MCF 10A (cell line): ENCODE measurements at regions of chr16 and their contacts with region 1.

Region 1: GRCh38 chr16:3400779-3401688 is at the starts of genes ZNF174 and ZSCAN32:
- DNase-seq: peak; percentile 99
- H3K4me3 Mint-ChIP-seq: peak within 1 kb of the TSS; percentile 92
- H3K27ac Mint-ChIP-seq: peak within 1 kb of the TSS; percentile 91
- H3K4me1 Mint-ChIP-seq: peaks cover 11% of the 10 kb centered on the region
- H3K27me3 Mint-ChIP-seq: no peaks in the 10 kb centered on the region
- CTCF ChIP-seq: no peak
- total RNA-seq, gene ZNF174: 7.5 and 8.9 TPM in 2 replicates
- total RNA-seq, gene ZSCAN32: 17.5 and 18.1 TPM in 2 replicates

Region 2: DNA sequence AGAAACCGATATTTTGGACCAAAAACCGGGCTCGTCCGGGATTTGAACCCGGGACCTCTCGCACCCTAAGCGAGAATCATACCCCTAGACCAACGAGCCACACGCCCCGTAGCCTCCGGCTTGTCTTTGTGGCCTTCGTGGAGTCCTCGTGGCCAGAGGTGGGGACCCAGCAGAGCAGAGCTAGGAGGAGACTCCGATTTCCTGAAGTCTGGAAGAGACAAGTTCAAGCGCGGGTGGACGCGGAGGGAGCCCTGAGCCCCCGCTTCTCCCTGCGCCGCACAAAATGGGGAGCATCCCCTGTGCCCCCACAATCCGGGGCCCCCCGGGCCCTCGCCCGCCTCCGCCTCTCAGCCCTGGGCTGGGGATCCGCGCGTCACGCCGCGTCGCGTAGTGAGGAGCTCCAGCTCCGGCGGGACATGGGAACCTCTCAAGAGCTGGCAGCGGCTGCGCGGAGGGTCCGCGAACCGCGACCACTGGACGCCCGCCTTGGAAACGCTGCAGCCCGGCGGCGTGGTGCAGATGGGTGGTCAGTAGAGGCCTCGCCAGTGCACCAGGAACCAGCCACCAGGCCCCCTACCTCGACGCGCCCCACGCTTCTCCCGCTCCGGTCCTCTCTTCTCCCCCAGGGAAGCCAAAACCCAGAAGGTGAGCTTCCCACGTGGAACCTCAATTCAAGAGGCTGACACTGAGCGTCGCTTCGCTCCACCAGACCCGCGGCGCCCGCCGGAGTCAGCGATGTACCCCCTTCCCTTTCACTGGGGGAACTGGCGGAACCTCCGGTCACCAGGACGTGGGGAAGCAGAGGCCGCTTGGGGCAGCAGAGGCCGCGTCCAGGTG is 218.2 kb before region 1 on chr16:
- CTCF ChIA-PET with region 1: no interaction called
- POLR2A ChIA-PET with region 1: interaction called, 3 read pairs
- intact Hi-C with region 1: loop called (anchors 2 kb)
- DNase-seq: peak; percentile 72
- H3K4me3 Mint-ChIP-seq: peak overlapping the region; percentile 87
- H3K27ac Mint-ChIP-seq: peak overlapping the region; percentile 87
- H3K4me1 Mint-ChIP-seq: peaks cover 6% of the 10 kb centered on the region
- H3K27me3 Mint-ChIP-seq: no peaks in the 10 kb centered on the region
- CTCF ChIP-seq: no peak

Region 3: GRCh38 chr16:3305109-3306068 is 95.6 kb before region 1 on chr16 and contains the starts of genes TIGD7 and ZNF75A:
- CTCF ChIA-PET with region 1: no interaction called
- POLR2A ChIA-PET with region 1: interaction called, 23 read pairs
- intact Hi-C with region 1: no loop called
- DNase-seq: peak; percentile 81
- H3K4me3 Mint-ChIP-seq: peak within 1 kb of the TSS; percentile 70
- H3K27ac Mint-ChIP-seq: peak within 1 kb of the TSS; percentile 54
- H3K4me1 Mint-ChIP-seq: no peaks in the 10 kb centered on the region
- H3K27me3 Mint-ChIP-seq: no peaks in the 10 kb centered on the region
- CTCF ChIP-seq: no peak
- total RNA-seq, gene TIGD7: 3.4 and 5.5 TPM in 2 replicates
- total RNA-seq, gene ZNF75A: 24.3 and 28.2 TPM in 2 replicates

Region 4: GRCh38 chr16:3413730-3414379 is 12.8 kb after region 1 on chr16:
- CTCF ChIA-PET with region 1: interaction called, 3 read pairs
- POLR2A ChIA-PET with region 1: interaction called, 11 read pairs
- intact Hi-C with region 1: no loop called
- DNase-seq: no peak
- H3K4me3 Mint-ChIP-seq: no peak overlapping the region
- H3K27ac Mint-ChIP-seq: no peak overlapping the region
- H3K4me1 Mint-ChIP-seq: no peaks in the 10 kb centered on the region
- H3K27me3 Mint-ChIP-seq: no peaks in the 10 kb centered on the region
- CTCF ChIP-seq: no peak

Region 5: GRCh38 chr16:3443108-3444031 is 42.3 kb after region 1 on chr16 and contains the starts of genes NAA60 and ZNF597:
- CTCF ChIA-PET with region 1: no interaction called
- POLR2A ChIA-PET with region 1: interaction called, 53 read pairs
- intact Hi-C with region 1: no loop called
- DNase-seq: peak; percentile 93
- H3K4me3 Mint-ChIP-seq: peak within 1 kb of the TSS; percentile 87
- H3K27ac Mint-ChIP-seq: peak within 1 kb of the TSS; percentile 96
- H3K4me1 Mint-ChIP-seq: no peaks in the 10 kb centered on the region
- H3K27me3 Mint-ChIP-seq: no peaks in the 10 kb centered on the region
- CTCF ChIP-seq: no peak
- total RNA-seq, gene NAA60: 38.6 and 40.8 TPM in 2 replicates
- total RNA-seq, gene ZNF597: 2.3 and 2.5 TPM in 2 replicates

Region 6: GRCh38 chr16:3457434-3458252 is 56.6 kb after region 1 on chr16:
- CTCF ChIA-PET with region 1: no interaction called
- POLR2A ChIA-PET with region 1: interaction called, 27 read pairs
- intact Hi-C with region 1: loop called (anchors 2 kb)
- DNase-seq: peak; percentile 87
- H3K4me3 Mint-ChIP-seq: peak overlapping the region; percentile 84
- H3K27ac Mint-ChIP-seq: peak overlapping the region; percentile 75
- H3K4me1 Mint-ChIP-seq: peaks cover 31% of the 10 kb centered on the region
- H3K27me3 Mint-ChIP-seq: no peaks in the 10 kb centered on the region
- CTCF ChIP-seq: peak; percentile 34

Region 7: GRCh38 chr16:3520413-3520812 is 119.4 kb after region 1 on chr16:
- CTCF ChIA-PET with region 1: no interaction called
- POLR2A ChIA-PET with region 1: no interaction called
- intact Hi-C with region 1: no loop called
- DNase-seq: no peak
- H3K4me3 Mint-ChIP-seq: no peak overlapping the region
- H3K27ac Mint-ChIP-seq: no peak overlapping the region
- H3K4me1 Mint-ChIP-seq: no peaks in the 10 kb centered on the region
- H3K27me3 Mint-ChIP-seq: no peaks in the 10 kb centered on the region
- CTCF ChIP-seq: no peak